CD8-positive, alpha-beta T cell (primary cell): ENCODE measurements at regions of chr19 and their contacts with region 1.

Region 1: GRCh38 chr19:40798223-40798996 is 581 bp upstream of the EGLN2 start:
- DNase-seq: peak; percentile 100
- ATAC-seq: peak; percentile 82
- H3K4me3 ChIP-seq: peak overlapping the region; percentile 60 to 91
- H3K4me3 Mint-ChIP-seq: peak overlapping the region; percentile 98
- H3K27ac ChIP-seq: peak overlapping the region; percentile 97
- H3K27ac Mint-ChIP-seq: peak overlapping the region; percentile 97
- H3K4me1 ChIP-seq: peaks cover 45% of the 10 kb centered on the region
- H3K4me1 Mint-ChIP-seq: peaks cover 50% of the 10 kb centered on the region
- H3K27me3 ChIP-seq: no peaks in the 10 kb centered on the region
- H3K27me3 Mint-ChIP-seq: no peaks in the 10 kb centered on the region
- CTCF ChIP-seq: peak; percentile 56

Region 2: DNA sequence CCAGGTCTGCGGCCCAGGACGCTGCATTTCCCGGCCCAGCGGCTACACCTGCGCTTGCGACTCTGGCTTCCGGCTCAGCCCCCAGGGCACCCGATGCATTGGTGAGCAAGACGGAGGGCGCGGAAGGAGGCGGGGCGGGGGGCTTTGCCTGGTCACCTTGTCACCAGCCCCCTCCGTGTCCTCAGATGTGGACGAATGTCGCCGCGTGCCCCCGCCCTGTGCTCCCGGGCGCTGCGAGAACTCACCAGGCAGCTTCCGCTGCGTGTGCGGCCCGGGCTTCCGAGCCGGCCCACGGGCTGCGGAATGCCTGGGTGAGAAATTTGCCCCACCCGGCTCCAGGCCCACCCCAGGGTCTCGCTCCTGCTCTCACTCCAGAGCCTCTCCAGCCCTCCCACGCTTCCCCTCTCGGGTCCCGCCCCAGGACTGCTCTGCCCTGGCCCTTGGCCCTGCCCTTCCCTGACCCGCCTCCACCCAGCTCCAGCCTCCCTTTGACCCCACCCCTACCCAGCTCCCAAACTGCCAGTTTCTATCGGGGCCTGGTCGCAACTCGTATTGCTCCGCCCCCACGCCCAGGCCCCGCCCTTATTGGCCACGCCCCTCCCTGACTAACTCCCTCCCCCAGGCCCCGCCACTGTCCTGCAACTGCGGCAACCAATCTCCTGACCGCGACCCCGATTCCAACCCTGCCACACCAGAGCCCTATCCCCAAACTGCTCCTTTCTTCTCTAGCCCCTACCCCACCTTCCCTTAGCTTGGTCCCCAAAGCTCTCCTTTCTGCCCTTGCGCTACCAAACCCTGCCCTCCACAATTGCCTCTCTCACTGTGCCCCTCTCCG is 188.6 kb before region 1 on chr19:
- CTCF ChIA-PET with region 1: no interaction called
- POLR2A ChIA-PET with region 1: no interaction called
- intact Hi-C with region 1: loop called in 1 of 2 experiments (anchors 2 kb)
- DNase-seq: peak; percentile 71 to 90 (median 84)
- ATAC-seq: peak; percentile 35
- H3K4me3 ChIP-seq: peak overlapping the region; percentile 50 to 56
- H3K4me3 Mint-ChIP-seq: peak overlapping the region; percentile 78
- H3K27ac ChIP-seq: peak overlapping the region; percentile 72 to 89
- H3K27ac Mint-ChIP-seq: peak overlapping the region; percentile 94
- H3K4me1 ChIP-seq: peaks cover 44% of the 10 kb centered on the region
- H3K4me1 Mint-ChIP-seq: peaks cover 68% of the 10 kb centered on the region
- H3K27me3 ChIP-seq: no peaks in the 10 kb centered on the region
- H3K27me3 Mint-ChIP-seq: no peaks in the 10 kb centered on the region
- CTCF ChIP-seq: no peak

Region 3: DNA sequence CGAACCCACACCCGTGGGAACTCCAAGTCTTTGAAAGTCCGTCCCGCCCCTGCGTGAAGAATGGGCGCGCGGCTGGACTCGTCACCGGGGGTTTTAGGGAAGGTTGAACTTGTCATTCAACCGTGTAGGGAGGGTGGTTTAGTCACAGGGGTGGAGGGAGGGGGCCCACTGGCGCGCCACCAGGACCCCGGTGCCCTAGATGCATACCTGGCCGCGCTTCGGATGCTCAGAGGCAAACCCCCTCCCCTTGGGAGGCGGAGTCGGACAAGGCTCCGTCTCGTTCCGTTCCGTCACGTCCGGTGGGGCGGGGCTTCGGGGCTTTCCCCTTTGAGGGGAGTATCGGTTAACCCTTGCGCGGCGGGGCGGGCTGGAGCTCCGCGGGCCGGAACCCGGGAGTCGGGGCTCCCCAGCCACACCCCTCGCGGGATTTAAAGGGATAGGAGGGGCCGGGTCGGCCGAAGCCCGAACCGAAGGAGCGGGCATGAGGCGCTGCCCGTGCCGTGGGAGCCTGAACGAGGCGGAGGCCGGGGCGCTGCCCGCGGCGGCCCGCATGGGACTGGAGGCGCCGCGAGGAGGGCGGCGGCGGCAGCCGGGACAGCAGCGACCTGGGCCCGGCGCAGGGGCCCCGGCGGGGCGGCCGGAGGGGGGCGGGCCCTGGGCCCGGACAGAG is 81.6 kb before region 1 on chr19 and contains the starts of genes COQ8B and ITPKC:
- CTCF ChIA-PET with region 1: no interaction called
- POLR2A ChIA-PET with region 1: interaction called, 3 read pairs
- intact Hi-C with region 1: loop called (anchors 1 kb)
- DNase-seq: peak; percentile 98 to 100 (median 100)
- ATAC-seq: peak; percentile 74
- H3K4me3 ChIP-seq: peak within 1 kb of the TSS; percentile 66 to 93
- H3K4me3 Mint-ChIP-seq: peak within 1 kb of the TSS; percentile 88
- H3K27ac ChIP-seq: peak within 1 kb of the TSS; percentile 88 to 89
- H3K27ac Mint-ChIP-seq: peak within 1 kb of the TSS; percentile 97
- H3K4me1 ChIP-seq: peaks cover 61% of the 10 kb centered on the region
- H3K4me1 Mint-ChIP-seq: peaks cover 70% of the 10 kb centered on the region
- H3K27me3 ChIP-seq: no peaks in the 10 kb centered on the region
- H3K27me3 Mint-ChIP-seq: no peaks in the 10 kb centered on the region
- CTCF ChIP-seq: no peak
- total RNA-seq, gene COQ8B: 14.0 to 14.2 TPM
- total RNA-seq, gene ITPKC: 5.9 to 6.4 TPM

Region 4: GRCh38 chr19:40813182-40813958 is 15.0 kb after region 1 on chr19:
- CTCF ChIA-PET with region 1: interaction called, 7 read pairs
- POLR2A ChIA-PET with region 1: interaction called, 14 read pairs
- intact Hi-C with region 1: loop called in 1 of 2 experiments (anchors 2 kb)
- DNase-seq: no peak
- ATAC-seq: no peak
- H3K4me3 ChIP-seq: no peak overlapping the region
- H3K4me3 Mint-ChIP-seq: no peak overlapping the region
- H3K27ac ChIP-seq: no peak overlapping the region
- H3K27ac Mint-ChIP-seq: peak overlapping the region; percentile 49
- H3K4me1 ChIP-seq: peaks cover 35% of the 10 kb centered on the region
- H3K4me1 Mint-ChIP-seq: peaks cover 38% of the 10 kb centered on the region
- H3K27me3 ChIP-seq: no peaks in the 10 kb centered on the region
- H3K27me3 Mint-ChIP-seq: no peaks in the 10 kb centered on the region
- CTCF ChIP-seq: no peak

Region 5: DNA sequence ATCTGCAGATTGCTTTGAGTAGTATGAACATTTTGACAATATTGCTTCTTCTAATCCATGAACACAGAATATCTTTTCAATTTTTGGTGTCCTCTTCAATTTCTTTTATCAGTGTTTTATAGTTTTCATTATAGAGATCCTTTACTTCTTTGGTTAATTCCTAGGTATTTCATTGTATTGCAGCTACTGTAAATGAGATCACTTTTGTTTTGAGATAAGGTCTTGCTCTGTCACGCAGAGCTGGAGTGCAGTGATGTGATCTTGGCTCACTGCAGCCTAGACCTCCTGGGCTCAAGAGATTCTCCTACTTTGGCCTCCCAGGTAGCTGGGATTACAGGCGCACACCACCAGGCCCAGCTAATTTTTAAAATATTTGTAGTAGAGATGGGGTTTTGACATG is 73.8 kb after region 1 on chr19:
- CTCF ChIA-PET with region 1: no interaction called
- POLR2A ChIA-PET with region 1: no interaction called
- intact Hi-C with region 1: no loop called
- DNase-seq: no peak
- ATAC-seq: no peak
- H3K4me3 ChIP-seq: no peak overlapping the region
- H3K4me3 Mint-ChIP-seq: no peak overlapping the region
- H3K27ac ChIP-seq: no peak overlapping the region
- H3K27ac Mint-ChIP-seq: no peak overlapping the region
- H3K4me1 ChIP-seq: peaks cover 11% of the 10 kb centered on the region
- H3K4me1 Mint-ChIP-seq: peaks cover 14% of the 10 kb centered on the region
- H3K27me3 ChIP-seq: no peaks in the 10 kb centered on the region
- H3K27me3 Mint-ChIP-seq: peaks cover 8% of the 10 kb centered on the region
- CTCF ChIP-seq: no peak